Activated CD4-positive, alpha-beta T cell treated with anti-CD3 and anti-CD28 coated beads, Interleukin-2, amount 10 ng/mL, durations not matched to agents 24 days and 14 days (primary cell): ENCODE measurements at regions of chr17 and their contacts with region 1.

Region 1: DNA sequence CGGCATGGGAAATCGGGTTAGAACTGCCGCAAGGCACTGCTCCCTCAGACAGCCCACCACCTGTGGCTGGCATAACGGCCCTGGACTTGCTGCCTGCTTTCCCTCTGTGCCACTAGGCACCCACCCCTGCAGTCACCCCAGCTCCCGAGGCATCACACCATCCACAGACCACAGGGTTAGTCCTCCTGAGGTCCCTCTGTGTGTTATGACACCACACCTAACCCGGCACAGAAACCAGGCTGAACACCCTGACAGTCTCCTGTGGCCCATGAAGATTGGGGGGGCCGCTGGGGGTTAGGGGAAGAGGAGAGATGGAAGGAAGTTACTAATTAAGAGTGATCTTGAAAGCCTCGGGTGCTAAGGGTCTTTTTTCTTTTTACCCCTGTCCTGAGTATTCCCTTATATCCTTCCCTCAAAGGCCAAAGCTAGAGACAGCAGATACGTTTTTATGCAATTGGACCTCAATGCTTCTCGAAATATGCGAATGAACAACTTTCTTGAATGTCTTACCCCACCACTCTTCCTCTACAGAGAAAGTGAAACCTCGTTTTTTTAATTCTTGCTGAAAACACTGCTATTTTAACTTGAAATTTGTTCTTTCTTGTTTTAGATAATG is 7.0 kb downstream of the CYTH1 start:
- DNase-seq: peak; percentile 92
- H3K4me3 Mint-ChIP-seq: peak overlapping the region; percentile 89
- H3K27ac Mint-ChIP-seq: peak overlapping the region; percentile 98
- H3K4me1 Mint-ChIP-seq: peaks cover 62% of the 10 kb centered on the region
- H3K27me3 Mint-ChIP-seq: no peaks in the 10 kb centered on the region

Region 2: GRCh38 chr17:77942112-77942988 is 832.7 kb before region 1 on chr17:
- intact Hi-C with region 1: no loop called
- DNase-seq: no peak
- H3K4me3 Mint-ChIP-seq: no peak overlapping the region
- H3K27ac Mint-ChIP-seq: no peak overlapping the region
- H3K4me1 Mint-ChIP-seq: peaks cover under 1% of the 10 kb centered on the region
- H3K27me3 Mint-ChIP-seq: peaks cover 30% of the 10 kb centered on the region

Region 3: DNA sequence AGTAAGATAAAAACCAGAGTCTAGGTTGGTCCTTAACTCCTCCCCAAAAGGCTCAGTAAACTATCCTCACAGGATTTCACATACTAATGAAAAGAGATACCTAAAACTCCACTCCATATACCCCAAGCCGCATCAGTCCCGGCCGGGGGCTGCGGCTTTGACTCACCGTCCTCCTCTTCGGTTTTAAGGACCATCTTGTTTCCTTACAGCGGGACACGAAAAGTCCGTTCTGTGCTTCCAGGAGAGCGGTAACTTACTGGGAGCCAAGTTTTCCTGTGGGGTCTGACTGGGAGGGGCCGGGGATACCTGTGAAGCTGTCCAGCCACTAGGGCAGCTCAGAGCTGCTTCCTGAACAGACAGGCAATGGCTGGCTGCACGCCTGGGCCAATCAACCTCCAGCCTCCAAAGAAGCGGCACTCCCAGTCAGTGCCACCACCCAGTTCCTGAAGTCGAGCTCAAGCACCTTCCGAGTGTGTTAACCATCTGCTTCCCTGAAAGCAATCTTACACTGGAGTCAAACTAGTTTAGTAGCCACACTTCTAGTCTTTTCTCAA is 38.5 kb before region 1 on chr17:
- intact Hi-C with region 1: loop called (anchors 5 kb)
- DNase-seq: peak; percentile 91
- H3K4me3 Mint-ChIP-seq: peak overlapping the region; percentile 88
- H3K27ac Mint-ChIP-seq: peak overlapping the region; percentile 90
- H3K4me1 Mint-ChIP-seq: peaks cover 80% of the 10 kb centered on the region
- H3K27me3 Mint-ChIP-seq: no peaks in the 10 kb centered on the region

Region 4: DNA sequence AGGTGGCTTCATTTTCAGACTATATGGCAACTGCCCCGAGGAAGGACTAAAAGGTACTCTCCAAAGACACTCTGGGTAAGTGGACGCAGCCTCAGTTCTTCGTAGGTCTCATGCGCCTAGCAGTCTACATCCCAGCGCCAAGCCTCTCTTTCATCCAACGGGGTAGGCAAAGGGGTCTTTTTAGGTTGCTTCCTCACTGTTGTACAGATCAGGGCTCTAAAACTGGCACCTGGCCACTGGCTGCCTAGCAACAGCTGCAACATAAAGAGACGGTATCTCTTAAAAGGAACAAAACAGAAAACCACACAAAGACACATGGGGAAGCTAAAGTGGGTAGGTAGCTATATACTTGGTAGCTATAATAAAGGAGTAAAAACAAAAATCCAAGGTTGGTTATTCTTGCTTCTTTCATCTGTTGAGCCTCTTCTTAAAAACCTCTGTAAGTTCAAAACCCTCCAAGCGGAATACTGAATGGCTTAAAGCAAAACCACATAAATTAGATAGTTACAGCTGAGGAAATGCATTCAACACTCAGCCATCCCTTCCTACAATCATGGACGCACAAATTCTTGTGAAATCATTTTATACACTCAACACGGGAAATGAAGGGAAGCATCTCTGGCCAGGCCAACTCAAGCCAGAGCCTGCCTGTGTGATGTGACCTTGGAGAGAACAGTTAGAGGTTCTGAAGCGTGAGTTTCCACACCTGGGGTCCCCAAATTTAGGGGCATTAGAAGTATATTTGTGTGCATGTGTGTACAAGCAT is 15.7 kb before region 1 on chr17:
- intact Hi-C with region 1: loop called (anchors 1 kb)
- DNase-seq: peak; percentile 94
- H3K4me3 Mint-ChIP-seq: peak overlapping the region; percentile 83
- H3K27ac Mint-ChIP-seq: peak overlapping the region; percentile 98
- H3K4me1 Mint-ChIP-seq: peaks cover 62% of the 10 kb centered on the region
- H3K27me3 Mint-ChIP-seq: no peaks in the 10 kb centered on the region

Region 5: GRCh38 chr17:78818932-78819331 is 43.9 kb after region 1 on chr17:
- intact Hi-C with region 1: loop called (anchors 5 kb)
- DNase-seq: peak; percentile 91
- H3K4me3 Mint-ChIP-seq: peak overlapping the region; percentile 70
- H3K27ac Mint-ChIP-seq: peak overlapping the region; percentile 79
- H3K4me1 Mint-ChIP-seq: peaks cover 54% of the 10 kb centered on the region
- H3K27me3 Mint-ChIP-seq: no peaks in the 10 kb centered on the region

Region 6: DNA sequence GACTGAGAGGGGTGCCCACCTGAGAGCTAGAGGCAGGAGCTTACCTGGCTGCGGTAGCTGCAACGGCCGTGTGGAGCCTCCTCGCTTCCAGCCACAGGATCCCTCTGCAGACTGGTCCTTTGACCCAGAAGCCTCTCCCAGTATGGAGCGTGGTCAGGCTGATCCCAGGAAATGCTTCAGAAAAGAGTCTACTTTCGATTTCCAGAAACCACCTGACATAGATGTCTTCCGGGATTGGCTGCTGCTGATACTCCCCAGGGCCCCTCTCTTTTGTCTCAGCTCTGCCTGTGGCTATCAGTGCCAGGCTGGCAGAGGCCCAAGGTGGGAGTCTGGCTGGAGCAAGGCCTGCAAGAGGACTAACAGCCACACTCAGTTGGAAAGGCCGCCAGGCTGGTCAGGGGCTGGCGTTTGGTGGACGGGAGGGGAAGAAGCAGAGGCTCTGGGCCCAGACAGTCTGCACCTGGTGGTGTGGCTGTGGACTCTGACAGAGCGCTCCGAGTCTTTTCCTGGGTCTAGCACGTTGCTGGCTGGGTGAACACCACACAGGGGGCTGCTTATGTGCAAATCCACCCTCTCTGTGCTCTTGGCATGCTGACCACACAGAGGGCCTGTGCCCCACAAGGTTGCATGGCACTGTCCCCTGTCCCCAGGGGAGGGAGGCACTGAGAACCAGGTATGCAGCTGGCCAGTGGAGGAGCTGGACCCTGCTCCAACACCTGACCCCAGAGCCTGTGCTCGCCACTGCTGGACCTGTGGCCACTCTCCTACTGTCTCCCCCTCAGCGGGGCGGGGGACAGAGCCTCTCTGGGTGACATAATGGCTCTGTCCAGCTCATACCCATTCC is 204.9 kb after region 1 on chr17 and contains the start of gene LGALS3BP:
- intact Hi-C with region 1: no loop called
- DNase-seq: peak; percentile 85
- H3K4me3 Mint-ChIP-seq: peak within 1 kb of the TSS; percentile 82
- H3K27ac Mint-ChIP-seq: peak within 1 kb of the TSS; percentile 88
- H3K4me1 Mint-ChIP-seq: peaks cover 11% of the 10 kb centered on the region
- H3K27me3 Mint-ChIP-seq: no peaks in the 10 kb centered on the region
- total RNA-seq, gene LGALS3BP: 73.3 and 74.2 TPM in 2 replicates